OCI-LY7 (cell line): ENCODE measurements at regions of chr5 and their contacts with region 1.

Region 1: DNA sequence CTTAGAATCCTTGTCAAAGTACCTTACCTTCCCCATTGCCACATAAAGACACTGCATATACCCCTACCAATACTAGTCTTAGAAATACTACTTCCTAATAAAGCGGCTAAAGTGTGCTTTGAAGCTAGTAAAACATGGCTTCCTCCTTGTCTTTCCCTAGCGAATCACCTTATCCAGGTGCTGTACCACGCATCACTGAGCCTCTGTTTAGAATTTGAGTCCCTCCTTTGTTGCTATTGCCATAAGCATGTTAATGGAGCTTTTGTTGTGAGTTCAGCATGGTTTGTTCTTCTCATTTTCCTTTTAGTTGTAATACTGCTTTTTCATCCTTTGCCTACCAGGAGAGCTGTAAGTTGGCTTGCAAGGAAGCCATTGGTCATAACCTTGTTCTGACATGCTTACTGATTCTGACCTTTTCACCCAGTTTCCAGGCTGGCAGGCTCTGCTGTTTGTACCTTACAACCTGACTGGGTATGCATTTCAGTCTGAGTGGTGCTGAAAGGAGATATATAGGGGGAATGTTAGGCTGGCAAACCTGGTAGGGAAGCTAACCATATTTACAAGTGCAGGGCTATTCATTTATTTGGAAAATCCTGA is 49.8 kb downstream of the LMNB1 start:
- DNase-seq: no peak
- H3K4me3 ChIP-seq: no peak overlapping the region
- H3K27ac ChIP-seq: no peak overlapping the region
- H3K4me1 ChIP-seq: no peaks in the 10 kb centered on the region
- CTCF ChIP-seq: no peak

Region 2: GRCh38 chr5:126814721-126815404 is 11.9 kb before region 1 on chr5:
- CTCF ChIA-PET with region 1: interaction called, 6 read pairs
- POLR2A ChIA-PET with region 1: interaction called, 10 read pairs
- intact Hi-C with region 1: no loop called
- DNase-seq: no peak
- H3K4me3 ChIP-seq: no peak overlapping the region
- H3K27ac ChIP-seq: no peak overlapping the region
- H3K4me1 ChIP-seq: peaks cover 11% of the 10 kb centered on the region
- CTCF ChIP-seq: no peak

Region 3: GRCh38 chr5:126917918-126918614 is 91.3 kb after region 1 on chr5:
- CTCF ChIA-PET with region 1: no interaction called
- POLR2A ChIA-PET with region 1: no interaction called
- intact Hi-C with region 1: no loop called
- DNase-seq: no peak
- H3K4me3 ChIP-seq: no peak overlapping the region
- H3K27ac ChIP-seq: no peak overlapping the region
- H3K4me1 ChIP-seq: no peaks in the 10 kb centered on the region
- CTCF ChIP-seq: no peak